ENCODE measurements at regions of chr3 and their contacts with region 1.

Region 1: GRCh38 chr3:157201648-157202278 is 41.8 kb upstream of the CCNL1 start:
- DNase-seq: no peak
- ATAC-seq: peak; percentile 16 to 64
- H3K4me3 ChIP-seq: no peak overlapping the region
- H3K27ac ChIP-seq: no peak overlapping the region
- H3K4me1 ChIP-seq: no peaks in the 10 kb centered on the region
- H3K27me3 ChIP-seq: no peaks in the 10 kb centered on the region

Region 2: DNA sequence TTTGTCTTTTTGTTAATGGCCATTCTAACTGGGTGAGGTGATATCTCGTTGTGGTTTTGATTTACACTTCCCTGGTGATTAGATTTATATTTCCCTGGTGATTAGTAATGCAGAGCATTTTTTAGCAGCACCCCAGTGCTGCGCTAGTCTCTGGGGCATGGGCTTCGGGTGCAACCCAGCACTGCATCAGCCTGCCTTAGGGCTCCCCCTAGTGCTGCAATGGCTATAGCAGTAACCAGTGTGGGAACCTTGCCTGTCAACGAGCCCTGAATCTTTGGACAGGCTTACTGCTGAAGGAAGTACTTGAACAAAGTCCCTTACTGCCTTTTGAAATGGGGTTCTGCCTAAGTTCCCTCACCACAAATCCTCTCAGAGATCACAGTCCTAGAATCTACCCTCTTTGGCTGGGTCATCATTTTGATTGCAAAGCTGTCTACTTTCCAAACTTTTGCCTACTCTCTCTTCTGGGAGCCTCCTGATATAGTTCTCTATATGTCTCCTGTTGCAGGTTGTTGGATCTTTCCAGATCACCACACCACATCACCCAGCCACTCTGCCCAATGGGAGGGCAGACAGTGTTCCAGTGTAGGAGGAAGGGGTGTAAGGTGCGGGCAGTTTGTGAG is 37.4 kb after region 1 on chr3:
- intact Hi-C with region 1: loop called in 1 of 4 experiments (anchors 5 kb)
- DNase-seq: peak; percentile 53 to 82 (median 73)
- ATAC-seq: peak; percentile 85 to 89
- H3K4me3 ChIP-seq: no peak overlapping the region
- H3K27ac ChIP-seq: no peak overlapping the region
- H3K4me1 ChIP-seq: no peaks in the 10 kb centered on the region
- H3K27me3 ChIP-seq: no peaks in the 10 kb centered on the region

Region 3: DNA sequence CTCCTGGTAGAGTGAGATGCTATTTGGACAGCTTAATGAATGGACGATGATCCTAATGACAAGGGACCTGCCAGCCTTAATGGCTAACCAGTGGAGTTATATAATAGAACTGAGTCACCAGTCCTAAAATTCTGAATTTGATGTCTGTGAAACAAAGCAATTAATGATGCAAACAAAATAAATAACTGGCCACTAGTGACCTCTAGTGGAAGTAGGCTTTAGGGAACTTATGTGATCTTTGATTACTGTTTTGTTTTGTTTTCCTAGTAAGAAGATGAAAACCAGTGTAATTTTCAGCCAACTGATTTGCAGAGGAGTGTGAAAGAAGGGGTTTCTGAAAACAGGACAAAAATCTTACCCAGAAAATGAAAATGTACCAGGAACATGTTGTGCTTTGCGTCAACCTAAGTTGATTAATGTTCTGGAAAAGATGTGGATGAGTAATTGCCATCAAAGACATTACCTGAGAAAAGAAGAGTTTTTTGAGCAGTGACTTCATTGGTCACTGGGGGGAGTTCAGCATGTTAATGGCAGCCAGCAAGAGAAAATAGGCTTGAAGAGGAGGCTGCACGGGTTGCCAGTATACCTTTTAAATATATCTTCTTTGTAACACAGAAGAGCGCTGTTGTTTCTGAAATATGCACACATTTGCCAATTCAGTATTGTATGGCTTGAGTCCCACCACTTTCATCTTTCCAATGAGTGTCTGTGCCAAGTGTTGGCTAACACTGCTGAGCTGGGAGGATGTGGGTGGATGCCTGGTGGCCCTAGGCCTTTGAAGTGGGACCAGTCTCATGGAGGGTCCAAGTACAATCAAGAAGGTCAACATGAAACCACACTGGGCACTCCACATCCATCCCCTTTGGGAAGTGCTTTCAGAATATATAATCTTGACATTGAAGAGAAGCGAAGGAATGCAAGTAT is 292.1 kb after region 1 on chr3:
- intact Hi-C with region 1: loop called (anchors 2 to 5 kb)
- DNase-seq: no peak
- ATAC-seq: peak in 1 of 2 donors; percentile 41
- H3K4me3 ChIP-seq: no peak overlapping the region
- H3K27ac ChIP-seq: no peak overlapping the region
- H3K4me1 ChIP-seq: no peaks in the 10 kb centered on the region
- H3K27me3 ChIP-seq: no peaks in the 10 kb centered on the region

Measured in right cardiac atrium (tissue), 5 donors.